Pancreas (tissue), 10 donors: ENCODE measurements at regions of chr1 and their contacts with region 1.

Region 1: GRCh38 chr1:9861360-9861759 is 37.6 kb upstream of the CLSTN1 start:
- DNase-seq: peak in 1 of 6 donors; percentile 55
- ATAC-seq: peak in 1 of 4 donors; percentile 8
- H3K4me3 ChIP-seq: no peak overlapping the region
- H3K27ac ChIP-seq: no peak overlapping the region
- H3K4me1 ChIP-seq: no peaks in the 10 kb centered on the region
- H3K27me3 ChIP-seq: no peaks in the 10 kb centered on the region
- CTCF ChIP-seq: no peak

Region 2: DNA sequence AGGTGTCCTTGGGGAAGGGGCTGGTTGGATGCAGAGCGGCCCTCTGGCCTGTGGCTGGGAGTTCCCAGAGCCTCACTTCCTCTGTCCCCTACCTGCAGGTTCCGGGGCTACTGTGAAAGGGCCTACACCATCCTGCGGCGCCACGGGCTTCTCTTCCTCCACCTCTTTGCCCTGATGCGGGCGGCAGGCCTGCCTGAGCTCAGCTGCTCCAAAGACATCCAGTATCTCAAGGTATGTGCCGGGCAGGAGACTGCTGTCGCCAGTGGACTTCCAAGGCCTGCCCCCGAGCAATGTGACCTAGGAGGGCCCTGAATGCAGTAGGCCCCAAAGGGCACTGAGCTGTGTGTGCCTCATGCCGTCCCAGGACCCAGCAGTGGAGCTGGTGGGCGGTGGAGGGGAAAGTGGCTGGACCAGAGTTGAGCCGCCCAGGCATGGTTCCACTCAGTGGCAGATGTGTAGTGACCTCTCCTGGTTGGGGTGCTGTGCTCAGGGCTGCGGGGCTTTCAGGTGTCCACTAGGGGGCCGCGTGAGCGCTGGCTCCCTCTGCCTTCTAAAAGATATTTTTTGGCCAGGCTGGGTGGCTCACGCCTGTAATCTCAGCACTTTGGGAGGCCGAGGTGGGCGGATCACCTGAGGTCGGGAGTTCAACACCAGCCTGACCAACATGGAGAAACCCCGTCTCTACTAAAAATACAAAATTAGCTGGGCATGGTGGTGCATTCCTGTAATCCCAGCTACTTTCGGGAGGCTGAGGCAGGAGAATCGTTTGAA is 136.5 kb before region 1 on chr1:
- intact Hi-C with region 1: loop called in 1 of 3 experiments (anchors 5 kb)
- DNase-seq: peak in 4 of 6 donors; percentile 45 to 75 (median 58)
- ATAC-seq: peak; percentile 51 to 85 (median 74)
- H3K4me3 ChIP-seq: no peak overlapping the region
- H3K27ac ChIP-seq: no peak overlapping the region
- H3K4me1 ChIP-seq: no peaks in the 10 kb centered on the region
- H3K27me3 ChIP-seq: no peaks in the 10 kb centered on the region
- CTCF ChIP-seq: peak; percentile 42 to 67 (median 56)